MCF 10A (cell line): ENCODE measurements at regions of chrX and their contacts with region 1.

Region 1: DNA sequence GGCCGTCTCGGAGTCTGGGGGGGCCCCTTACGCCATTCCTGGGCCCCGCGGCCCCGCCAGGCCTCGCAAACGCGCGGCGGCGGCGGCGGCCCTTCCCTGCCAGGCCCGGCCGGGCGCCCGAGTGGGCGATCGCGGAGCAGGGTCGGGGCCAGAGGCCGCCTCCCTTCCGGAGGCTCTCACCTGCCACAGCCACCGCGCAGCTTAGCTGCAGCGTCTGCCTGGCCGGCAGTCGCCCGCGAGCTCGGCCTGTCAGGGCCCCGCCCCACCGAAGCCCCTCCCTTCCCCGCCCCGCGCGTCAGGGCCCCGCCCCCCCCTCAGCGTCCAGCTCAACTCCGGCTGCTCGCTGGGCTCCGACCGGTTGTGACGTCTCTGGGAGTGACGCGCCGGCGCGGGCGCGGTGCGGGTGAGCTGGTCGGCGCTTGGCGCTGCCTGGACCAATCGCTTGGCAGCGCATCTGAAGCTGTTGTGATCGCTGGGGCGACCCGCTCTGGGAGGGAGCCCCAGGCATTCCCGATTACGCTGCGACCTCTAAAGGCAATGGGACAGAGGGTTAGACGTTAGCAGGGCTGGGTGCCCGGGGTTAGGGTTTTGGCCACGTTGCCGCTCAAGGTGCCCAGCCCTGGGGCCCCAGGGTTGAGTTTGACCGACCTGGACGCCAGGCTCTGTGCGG is at the start of gene SLC10A3:
- DNase-seq: peak; percentile 85
- H3K4me3 Mint-ChIP-seq: peak within 1 kb of the TSS; percentile 76
- H3K27ac Mint-ChIP-seq: peak within 1 kb of the TSS; percentile 83
- H3K4me1 Mint-ChIP-seq: no peaks in the 10 kb centered on the region
- H3K27me3 Mint-ChIP-seq: peaks cover 11% of the 10 kb centered on the region
- CTCF ChIP-seq: no peak
- total RNA-seq, gene SLC10A3: 17.9 and 21.2 TPM in 2 replicates

Region 2: GRCh38 chrX:154458114-154458953 is 32.2 kb before region 1 on chrX and contains the start of gene PLXNA3:
- CTCF ChIA-PET with region 1: no interaction called
- POLR2A ChIA-PET with region 1: interaction called, 12 read pairs
- intact Hi-C with region 1: no loop called
- DNase-seq: peak; percentile 28
- H3K4me3 Mint-ChIP-seq: peak within 1 kb of the TSS; percentile 84
- H3K27ac Mint-ChIP-seq: peak within 1 kb of the TSS; percentile 20
- H3K4me1 Mint-ChIP-seq: peaks cover 10% of the 10 kb centered on the region
- H3K27me3 Mint-ChIP-seq: peaks cover 23% of the 10 kb centered on the region
- CTCF ChIP-seq: no peak
- total RNA-seq, gene PLXNA3: 47.6 and 48.0 TPM in 2 replicates

Region 3: GRCh38 chrX:154502989-154503388 is 12.4 kb after region 1 on chrX:
- CTCF ChIA-PET with region 1: no interaction called
- POLR2A ChIA-PET with region 1: interaction called, 10 read pairs
- intact Hi-C with region 1: no loop called
- DNase-seq: no peak
- H3K4me3 Mint-ChIP-seq: no peak overlapping the region
- H3K27ac Mint-ChIP-seq: no peak overlapping the region
- H3K4me1 Mint-ChIP-seq: no peaks in the 10 kb centered on the region
- H3K27me3 Mint-ChIP-seq: no peaks in the 10 kb centered on the region
- CTCF ChIP-seq: no peak

Region 4: GRCh38 chrX:154515878-154516655 is 25.5 kb after region 1 on chrX and contains the start of gene FAM3A:
- CTCF ChIA-PET with region 1: interaction called, 3 read pairs
- POLR2A ChIA-PET with region 1: interaction called, 48 read pairs
- intact Hi-C with region 1: no loop called
- DNase-seq: peak; percentile 81
- H3K4me3 Mint-ChIP-seq: peak within 1 kb of the TSS; percentile 67
- H3K27ac Mint-ChIP-seq: peak within 1 kb of the TSS; percentile 88
- H3K4me1 Mint-ChIP-seq: no peaks in the 10 kb centered on the region
- H3K27me3 Mint-ChIP-seq: peaks cover 12% of the 10 kb centered on the region
- CTCF ChIP-seq: no peak
- total RNA-seq, gene FAM3A: 40.9 and 45.3 TPM in 2 replicates